ENCODE measurements at regions of chrX and their contacts with region 1.

Region 1: GRCh38 chrX:9708904-9709553 is 56.6 kb downstream of the GPR143 start:
- DNase-seq: peak; percentile 72 to 86
- ATAC-seq: peak; percentile 68 to 91 (median 78)
- H3K4me3 ChIP-seq: no peak overlapping the region
- H3K27ac ChIP-seq: no peak overlapping the region
- H3K4me1 ChIP-seq: no peaks in the 10 kb centered on the region
- H3K27me3 ChIP-seq: no peaks in the 10 kb centered on the region
- CTCF ChIP-seq: peak; percentile 86

Region 2: GRCh38 chrX:8743126-8743732 is 965.8 kb before region 1 on chrX:
- intact Hi-C with region 1: loop called in 1 of 2 experiments (anchors 10 kb)
- DNase-seq: peak; percentile 56 to 71
- ATAC-seq: peak in 2 of 4 donors; percentile 58 to 75
- H3K4me3 ChIP-seq: no peak overlapping the region
- H3K27ac ChIP-seq: no peak overlapping the region
- H3K4me1 ChIP-seq: no peaks in the 10 kb centered on the region
- H3K27me3 ChIP-seq: no peaks in the 10 kb centered on the region
- CTCF ChIP-seq: peak; percentile 73

Region 3: DNA sequence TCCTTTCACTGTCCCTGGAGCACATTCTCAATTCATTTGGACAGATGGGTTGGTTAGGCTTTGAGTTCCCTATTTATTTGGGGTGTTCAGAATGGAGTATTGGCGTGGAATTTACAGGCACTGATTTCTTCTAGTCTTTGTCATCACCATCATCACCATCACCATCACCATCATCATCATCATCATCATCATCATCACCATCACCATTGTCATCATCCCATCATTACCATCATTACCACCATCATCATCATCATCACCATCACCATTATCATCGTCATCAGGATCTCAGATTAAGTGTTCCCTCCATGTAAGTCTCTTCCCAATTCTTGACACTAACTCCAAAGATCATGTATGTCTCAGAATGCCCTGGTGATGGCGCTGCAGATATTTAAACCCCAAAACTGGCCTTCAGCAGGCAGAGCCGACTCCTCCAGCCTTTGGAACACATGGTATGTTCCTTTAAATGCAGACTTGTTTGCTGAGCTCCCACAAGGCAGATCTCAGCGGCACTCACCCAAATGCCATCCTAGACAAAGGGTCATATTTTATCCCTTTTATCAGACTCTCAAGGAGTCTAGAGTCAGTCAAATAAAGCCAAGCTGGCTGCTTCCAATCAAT is 888.0 kb before region 1 on chrX:
- intact Hi-C with region 1: loop called in 1 of 2 experiments (anchors 10 kb)
- DNase-seq: no peak
- ATAC-seq: no peak
- H3K4me3 ChIP-seq: no peak overlapping the region
- H3K27ac ChIP-seq: no peak overlapping the region
- H3K4me1 ChIP-seq: no peaks in the 10 kb centered on the region
- H3K27me3 ChIP-seq: peaks cover 0 to 8% (median 0%) of the 10 kb centered on the region in 3 donors
- CTCF ChIP-seq: no peak

Region 4: DNA sequence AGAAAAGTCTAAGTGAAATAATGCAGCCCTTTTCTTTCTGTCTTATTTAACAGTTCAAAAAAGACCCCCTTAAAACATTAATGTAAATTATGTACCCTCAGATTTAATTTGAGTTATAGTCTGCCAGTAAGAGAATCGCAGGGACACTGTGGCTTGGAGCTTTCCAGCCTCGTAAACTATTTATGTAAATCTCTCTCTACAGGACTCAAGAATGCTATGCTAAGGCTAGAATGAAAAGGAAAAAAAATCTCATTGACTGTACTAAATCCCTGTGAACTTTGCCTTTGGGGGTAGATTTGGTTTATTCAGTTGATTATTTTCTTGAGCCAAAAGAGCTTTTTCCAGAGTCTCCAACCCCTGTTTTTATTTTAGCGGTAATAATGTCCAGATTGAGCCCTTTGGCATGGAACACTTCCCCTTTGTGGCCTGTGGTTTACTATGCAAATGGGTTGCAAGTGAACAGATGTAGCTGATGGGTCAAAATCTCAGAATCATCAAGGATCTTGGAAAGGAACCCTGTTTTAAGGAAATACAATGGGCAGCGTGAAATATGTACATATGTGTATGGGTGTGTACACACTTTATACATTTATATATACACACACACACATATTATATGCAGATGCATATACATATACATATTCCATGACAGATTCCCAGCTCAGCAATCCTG is 748.1 kb before region 1 on chrX:
- intact Hi-C with region 1: loop called in 1 of 2 experiments (anchors 10 kb)
- DNase-seq: no peak
- ATAC-seq: no peak
- H3K4me3 ChIP-seq: no peak overlapping the region
- H3K27ac ChIP-seq: no peak overlapping the region
- H3K4me1 ChIP-seq: no peaks in the 10 kb centered on the region
- H3K27me3 ChIP-seq: peaks cover 0 to 20% (median 0%) of the 10 kb centered on the region in 3 donors
- CTCF ChIP-seq: no peak

Region 5: GRCh38 chrX:9341291-9342201 is 367.5 kb before region 1 on chrX:
- intact Hi-C with region 1: loop called in 1 of 2 experiments (anchors 10 kb)
- DNase-seq: peak; percentile 66 to 82
- ATAC-seq: peak in 1 of 4 donors; percentile 34
- H3K4me3 ChIP-seq: peak overlapping the region; percentile 42
- H3K27ac ChIP-seq: peak overlapping the region; percentile 62
- H3K4me1 ChIP-seq: peaks cover 23% of the 10 kb centered on the region
- H3K27me3 ChIP-seq: peaks cover 0 to 9% (median 0%) of the 10 kb centered on the region in 3 donors
- CTCF ChIP-seq: no peak

Region 6: GRCh38 chrX:9464435-9465371 is 244.3 kb before region 1 on chrX and contains the start of gene TBL1X:
- intact Hi-C with region 1: loop called (anchors 5 to 10 kb)
- DNase-seq: peak; percentile 70 to 79
- ATAC-seq: peak; percentile 55 to 63 (median 62)
- H3K4me3 ChIP-seq: peak within 1 kb of the TSS; percentile 80
- H3K27ac ChIP-seq: peak within 1 kb of the TSS; percentile 78
- H3K4me1 ChIP-seq: peaks cover 9% of the 10 kb centered on the region
- H3K27me3 ChIP-seq: peaks cover 0 to 24% (median 0%) of the 10 kb centered on the region in 3 donors
- CTCF ChIP-seq: no peak
- total RNA-seq, gene TBL1X: 7.1 to 17.6 (median 8.0) TPM

Region 7: GRCh38 chrX:9770319-9770718 is 61.3 kb after region 1 on chrX:
- intact Hi-C with region 1: no loop called
- DNase-seq: no peak
- ATAC-seq: no peak
- H3K4me3 ChIP-seq: no peak overlapping the region
- H3K27ac ChIP-seq: no peak overlapping the region
- H3K4me1 ChIP-seq: no peaks in the 10 kb centered on the region
- H3K27me3 ChIP-seq: peaks cover 0 to 18% (median 0%) of the 10 kb centered on the region in 3 donors
- CTCF ChIP-seq: no peak